Activated CD8-positive, alpha-beta memory T cell treated with anti-CD3 and anti-CD28 coated beads, Interleukin-2, amount 10 ng/mL, durations not matched to agents 7 days and 5 days (primary cell): ENCODE measurements at regions of chr7 and their contacts with region 1.

Region 1: GRCh38 chr7:38369816-38370493 is 96.5 kb upstream of the TARP start:
- DNase-seq: peak; percentile 91
- ATAC-seq: peak; percentile 77
- H3K4me3 Mint-ChIP-seq: peak overlapping the region; percentile 31
- H3K27ac Mint-ChIP-seq: peak overlapping the region; percentile 60
- H3K4me1 Mint-ChIP-seq: peaks cover 61% of the 10 kb centered on the region
- H3K27me3 Mint-ChIP-seq: no peaks in the 10 kb centered on the region

Region 2: DNA sequence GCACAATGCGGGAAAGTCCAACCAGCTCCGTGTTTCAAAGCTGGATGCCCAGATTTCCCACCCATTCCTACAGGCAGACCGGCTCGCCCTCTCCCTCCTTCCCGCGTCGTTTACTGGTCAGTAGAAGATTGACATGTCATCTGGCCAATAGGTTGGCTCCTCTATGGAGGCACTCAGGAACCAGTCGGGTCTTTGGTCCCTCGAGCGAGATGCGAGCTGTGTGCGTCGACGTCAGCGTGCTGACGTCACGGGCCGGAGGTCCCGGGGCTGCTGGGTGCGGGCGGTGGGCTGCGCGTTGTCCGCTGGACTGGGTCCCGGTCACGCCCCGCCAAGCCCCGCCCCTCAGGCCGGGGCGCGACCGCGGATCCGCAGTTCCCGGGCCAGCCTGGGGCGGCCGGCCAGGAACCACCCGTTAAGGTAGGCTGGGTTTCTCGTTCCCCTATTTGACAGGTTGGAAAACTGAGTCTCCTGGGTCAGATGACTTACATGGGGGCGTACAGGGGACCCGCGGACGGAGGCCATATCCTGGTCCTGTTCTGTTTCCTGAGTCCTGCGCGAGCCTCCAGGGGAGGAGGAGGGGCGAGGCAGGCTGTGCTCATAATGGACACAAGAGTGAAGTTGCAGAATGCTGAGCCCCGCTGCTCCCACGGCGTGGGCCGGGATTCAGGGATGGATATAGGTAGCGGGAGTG is 191.8 kb before region 1 on chr7 and contains the start of gene STARD3NL:
- CTCF ChIA-PET with region 1: interaction called, 24 read pairs
- DNase-seq: peak; percentile 96
- ATAC-seq: peak; percentile 98
- H3K4me3 Mint-ChIP-seq: peak within 1 kb of the TSS; percentile 94
- H3K27ac Mint-ChIP-seq: peak within 1 kb of the TSS; percentile 92
- H3K4me1 Mint-ChIP-seq: peaks cover 41% of the 10 kb centered on the region
- H3K27me3 Mint-ChIP-seq: no peaks in the 10 kb centered on the region
- total RNA-seq, gene STARD3NL: 31.9 to 40.0 TPM

Region 3: GRCh38 chr7:38195804-38196595 is 174.0 kb before region 1 on chr7:
- CTCF ChIA-PET with region 1: interaction called, 11 read pairs
- DNase-seq: no peak
- ATAC-seq: no peak
- H3K4me3 Mint-ChIP-seq: no peak overlapping the region
- H3K27ac Mint-ChIP-seq: no peak overlapping the region
- H3K4me1 Mint-ChIP-seq: peaks cover 20% of the 10 kb centered on the region
- H3K27me3 Mint-ChIP-seq: no peaks in the 10 kb centered on the region

Region 4: GRCh38 chr7:38232502-38233366 is 137.2 kb before region 1 on chr7:
- CTCF ChIA-PET with region 1: interaction called, 40 read pairs
- DNase-seq: peak; percentile 95
- ATAC-seq: peak; percentile 80
- H3K4me3 Mint-ChIP-seq: peak overlapping the region; percentile 55
- H3K27ac Mint-ChIP-seq: peak overlapping the region; percentile 96
- H3K4me1 Mint-ChIP-seq: peaks cover 91% of the 10 kb centered on the region
- H3K27me3 Mint-ChIP-seq: no peaks in the 10 kb centered on the region

Region 5: GRCh38 chr7:38382684-38383083 is 12.7 kb after region 1 on chr7:
- CTCF ChIA-PET with region 1: interaction called, 58 read pairs
- DNase-seq: no peak
- ATAC-seq: no peak
- H3K4me3 Mint-ChIP-seq: no peak overlapping the region
- H3K27ac Mint-ChIP-seq: no peak overlapping the region
- H3K4me1 Mint-ChIP-seq: peaks cover 11% of the 10 kb centered on the region
- H3K27me3 Mint-ChIP-seq: no peaks in the 10 kb centered on the region